AG04449 (cell line): ENCODE measurements at regions of chr10 and their contacts with region 1.

Region 1: GRCh38 chr10:69644658-69645295 is 14.7 kb downstream of the FAM241B start:
- DNase-seq: no peak
- H3K4me3 ChIP-seq: no peak overlapping the region
- CTCF ChIP-seq: peak; percentile 80

Region 2: GRCh38 chr10:69498711-69499476 is 145.9 kb before region 1 on chr10:
- CTCF ChIA-PET with region 1: no interaction called
- POLR2A ChIA-PET with region 1: no interaction called
- DNase-seq: no peak
- H3K4me3 ChIP-seq: no peak overlapping the region
- CTCF ChIP-seq: no peak

Region 3: GRCh38 chr10:69629897-69630650 is 14.7 kb before region 1 on chr10 and contains the start of gene FAM241B:
- CTCF ChIA-PET with region 1: interaction called, 89 read pairs
- POLR2A ChIA-PET with region 1: no interaction called
- DNase-seq: no peak
- H3K4me3 ChIP-seq: peak within 1 kb of the TSS; percentile 30
- CTCF ChIP-seq: peak; percentile 87

Region 4: DNA sequence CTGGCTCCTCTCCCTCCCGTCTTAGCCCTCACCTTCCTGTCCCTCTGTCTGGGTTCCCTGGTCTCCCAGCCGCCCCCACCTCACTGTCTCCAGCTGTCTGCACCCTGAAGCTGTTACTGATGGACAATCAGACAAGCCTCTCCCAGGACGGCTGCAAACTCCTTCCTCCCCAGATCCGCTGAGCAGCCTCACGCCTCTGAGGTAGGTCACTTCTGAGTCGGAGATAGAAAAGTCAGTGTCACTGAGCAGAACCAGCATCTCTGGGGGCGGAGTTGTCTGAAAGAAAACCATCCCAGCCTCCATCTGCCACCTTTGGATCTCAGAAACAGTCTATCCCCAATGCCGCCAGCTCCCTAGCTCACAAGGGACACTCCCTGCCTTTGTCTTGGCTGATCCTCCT is 12.7 kb after region 1 on chr10:
- CTCF ChIA-PET with region 1: interaction called, 45 read pairs
- POLR2A ChIA-PET with region 1: no interaction called
- DNase-seq: no peak
- H3K4me3 ChIP-seq: no peak overlapping the region
- CTCF ChIP-seq: no peak

Region 5: GRCh38 chr10:69696073-69696731 is 51.4 kb after region 1 on chr10:
- CTCF ChIA-PET with region 1: interaction called, 10 read pairs
- POLR2A ChIA-PET with region 1: no interaction called
- DNase-seq: peak; percentile 79
- H3K4me3 ChIP-seq: no peak overlapping the region
- CTCF ChIP-seq: peak; percentile 49

Region 6: DNA sequence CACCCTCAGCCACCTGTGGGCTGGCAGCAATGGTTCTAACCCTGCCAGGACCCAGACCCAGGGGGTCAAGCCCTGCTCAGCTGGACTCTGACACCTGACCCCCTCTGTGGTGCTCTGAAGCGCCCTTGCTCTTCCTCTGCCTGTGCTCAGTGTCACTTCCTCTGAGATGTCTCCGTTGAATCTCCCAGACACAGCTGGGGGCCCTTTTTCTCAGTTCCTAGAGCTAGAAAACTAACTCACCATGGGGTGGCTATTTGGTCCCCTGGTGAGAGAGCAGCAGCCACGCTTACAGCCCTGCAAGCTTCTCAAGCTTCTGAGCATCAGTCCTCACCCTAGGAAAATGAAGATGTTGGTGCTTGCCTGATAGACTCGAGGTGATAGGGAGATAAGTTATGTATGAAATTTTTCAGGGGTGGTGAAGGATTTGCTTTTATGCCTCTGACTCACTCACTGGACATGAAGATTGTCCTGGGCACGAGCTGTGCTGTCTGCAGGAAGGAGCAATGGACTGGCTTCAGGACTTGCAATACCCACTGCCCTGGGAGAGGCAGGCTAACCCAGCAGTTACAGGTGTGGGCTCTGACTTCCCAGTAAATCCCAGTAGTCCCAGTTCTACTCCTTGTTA is 186.6 kb after region 1 on chr10:
- CTCF ChIA-PET with region 1: no interaction called
- POLR2A ChIA-PET with region 1: no interaction called
- DNase-seq: no peak
- H3K4me3 ChIP-seq: no peak overlapping the region
- CTCF ChIP-seq: no peak